Upper lobe of right lung (tissue), 1 donor: ENCODE measurements at regions of chr5 and their contacts with region 1.

Region 1: DNA sequence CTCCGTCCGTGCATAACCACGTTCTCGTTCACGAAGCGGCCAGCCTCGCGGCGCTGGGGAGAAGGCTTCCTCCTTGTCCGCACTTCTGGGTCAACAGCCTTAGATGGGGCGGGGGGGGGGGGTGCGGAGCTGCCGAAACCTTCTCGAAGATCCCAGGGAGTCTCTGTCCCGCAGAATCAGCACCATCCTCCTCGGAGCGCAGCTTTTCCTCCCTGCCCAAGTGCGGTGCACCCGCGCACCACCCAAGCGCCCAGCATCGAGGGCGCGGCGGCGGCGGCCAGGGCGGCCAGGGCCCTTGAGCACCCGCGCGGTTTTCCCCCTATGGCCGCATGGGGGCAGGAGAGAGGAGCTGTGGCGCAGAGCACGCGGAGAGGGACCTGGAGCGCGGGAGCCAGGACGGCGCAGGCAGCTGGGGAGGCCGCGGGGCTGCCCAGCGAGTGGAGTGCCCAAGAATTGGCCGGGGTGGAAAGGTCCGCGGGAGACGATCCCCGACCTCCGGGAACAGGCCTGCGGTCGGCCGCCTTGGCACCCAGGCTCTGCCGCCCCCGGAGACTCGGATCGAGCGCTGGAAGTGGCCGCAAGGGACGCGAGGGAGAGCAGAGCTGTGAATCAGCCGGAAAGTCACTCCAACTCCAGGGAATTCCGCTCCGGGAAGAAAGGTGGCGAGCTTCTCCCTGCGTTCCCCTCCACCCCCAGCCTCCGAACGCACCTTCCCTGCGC is 43.1 kb downstream of the TMEM174 start:
- DNase-seq: peak; percentile 89
- ATAC-seq: peak; percentile 100
- H3K4me3 ChIP-seq: peak overlapping the region; percentile 36
- H3K27ac ChIP-seq: no peak overlapping the region
- H3K4me1 ChIP-seq: peaks cover 5% of the 10 kb centered on the region
- H3K27me3 ChIP-seq: peaks cover 92% of the 10 kb centered on the region
- CTCF ChIP-seq: peak; percentile 88

Region 2: GRCh38 chr5:72760259-72760658 is 455.8 kb before region 1 on chr5:
- intact Hi-C with region 1: no loop called
- DNase-seq: no peak
- ATAC-seq: no peak
- H3K4me3 ChIP-seq: no peak overlapping the region
- H3K27ac ChIP-seq: no peak overlapping the region
- H3K4me1 ChIP-seq: no peaks in the 10 kb centered on the region
- H3K27me3 ChIP-seq: no peaks in the 10 kb centered on the region
- CTCF ChIP-seq: no peak

Region 3: GRCh38 chr5:72799721-72800120 is 416.3 kb before region 1 on chr5:
- intact Hi-C with region 1: no loop called
- DNase-seq: no peak
- ATAC-seq: no peak
- H3K4me3 ChIP-seq: no peak overlapping the region
- H3K27ac ChIP-seq: no peak overlapping the region
- H3K4me1 ChIP-seq: no peaks in the 10 kb centered on the region
- H3K27me3 ChIP-seq: no peaks in the 10 kb centered on the region
- CTCF ChIP-seq: no peak

Region 4: DNA sequence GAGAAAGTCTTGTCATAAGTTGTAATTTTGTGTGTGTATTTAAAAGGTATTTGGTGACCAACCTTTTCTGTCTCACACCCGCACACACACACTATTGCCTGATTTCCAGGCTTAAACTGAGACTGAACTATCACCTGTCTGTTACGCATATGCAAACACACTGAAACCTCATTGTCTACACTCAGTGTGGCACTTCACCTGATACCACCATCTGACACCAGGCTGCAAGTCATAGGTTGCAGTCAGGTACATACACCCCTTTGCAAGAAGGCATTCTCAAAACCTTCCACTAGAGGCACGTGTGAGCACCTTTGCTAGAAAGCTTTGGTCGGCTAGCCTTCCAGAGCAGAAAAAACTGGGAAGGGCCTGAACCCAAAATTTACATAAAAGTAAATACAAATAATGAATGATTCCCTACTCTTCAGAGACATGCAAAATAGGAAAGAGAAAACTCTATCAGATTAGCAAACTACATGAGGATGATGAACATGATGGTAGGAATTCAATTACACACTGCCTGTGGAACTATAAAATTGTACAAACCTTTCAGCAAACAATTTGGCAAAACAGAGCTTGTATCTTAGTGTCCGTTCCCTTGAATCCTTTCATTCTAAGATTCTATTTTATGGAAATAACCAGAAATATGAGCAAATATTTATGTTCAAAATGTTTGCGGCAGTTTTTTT is 238.4 kb after region 1 on chr5:
- intact Hi-C with region 1: loop called (anchors 10 kb)
- DNase-seq: no peak
- ATAC-seq: peak; percentile 85
- H3K4me3 ChIP-seq: no peak overlapping the region
- H3K27ac ChIP-seq: no peak overlapping the region
- H3K4me1 ChIP-seq: peaks cover 9% of the 10 kb centered on the region
- H3K27me3 ChIP-seq: peaks cover 88% of the 10 kb centered on the region
- CTCF ChIP-seq: peak; percentile 79